Activated T-helper 2 cell treated with anti-CD3 and anti-CD28 coated beads, Interferon-gamma antibody, Interleukin-2, Interleukin-4, amounts not matched to agents 10 μg/mL and 5 μg/mL and 100 μg/mL, durations not matched to agents 14 hours and 24 hours and 36 hours (primary cell): ENCODE measurements at regions of chr4 and their contacts with region 1.

Region 1: GRCh38 chr4:67700738-67701516 is at the start of gene UBA6:
- DNase-seq: peak; percentile 94
- H3K4me3 Mint-ChIP-seq: peak within 1 kb of the TSS; percentile 99
- H3K27ac Mint-ChIP-seq: peak within 1 kb of the TSS; percentile 96
- H3K4me1 Mint-ChIP-seq: peaks cover 53% of the 10 kb centered on the region
- H3K27me3 Mint-ChIP-seq: no peaks in the 10 kb centered on the region
- total RNA-seq, gene UBA6: 84.8 and 88.4 TPM in 2 replicates

Region 2: GRCh38 chr4:67522851-67523671 is 177.9 kb before region 1 on chr4:
- intact Hi-C with region 1: loop called (anchors 1 kb)
- DNase-seq: no peak
- H3K4me3 Mint-ChIP-seq: peak overlapping the region; percentile 45
- H3K27ac Mint-ChIP-seq: peak overlapping the region; percentile 96
- H3K4me1 Mint-ChIP-seq: peaks cover 60% of the 10 kb centered on the region
- H3K27me3 Mint-ChIP-seq: no peaks in the 10 kb centered on the region

Region 3: GRCh38 chr4:67684839-67685531 is 15.9 kb before region 1 on chr4:
- intact Hi-C with region 1: loop called (anchors 2 kb)
- DNase-seq: no peak
- H3K4me3 Mint-ChIP-seq: no peak overlapping the region
- H3K27ac Mint-ChIP-seq: peak overlapping the region; percentile 23
- H3K4me1 Mint-ChIP-seq: peaks cover 44% of the 10 kb centered on the region
- H3K27me3 Mint-ChIP-seq: no peaks in the 10 kb centered on the region

Region 4: GRCh38 chr4:67746797-67747495 is 46.0 kb after region 1 on chr4:
- intact Hi-C with region 1: loop called (anchors 2 kb)
- DNase-seq: no peak
- H3K4me3 Mint-ChIP-seq: no peak overlapping the region
- H3K27ac Mint-ChIP-seq: peak overlapping the region; percentile 2
- H3K4me1 Mint-ChIP-seq: peaks cover 17% of the 10 kb centered on the region
- H3K27me3 Mint-ChIP-seq: no peaks in the 10 kb centered on the region

Region 5: DNA sequence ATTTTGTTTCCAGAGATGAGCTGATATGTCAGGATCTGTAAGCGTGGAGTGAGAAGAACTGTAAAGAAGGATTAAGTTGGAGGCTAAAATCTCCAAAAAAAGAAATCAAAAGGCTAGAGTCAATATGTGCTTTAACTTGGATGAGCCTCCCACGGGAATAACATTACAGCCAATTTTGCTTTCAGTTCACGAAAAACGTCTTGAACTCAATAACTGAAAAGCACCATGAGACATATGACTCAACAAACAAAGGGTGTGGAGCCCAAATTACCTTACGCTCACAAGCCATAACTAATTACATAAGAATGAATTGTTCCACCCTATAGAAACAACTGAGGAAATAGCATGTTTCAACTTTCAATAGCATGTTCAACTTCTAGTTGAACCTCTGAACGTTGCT is 160.6 kb after region 1 on chr4:
- intact Hi-C with region 1: no loop called
- DNase-seq: no peak
- H3K4me3 Mint-ChIP-seq: no peak overlapping the region
- H3K27ac Mint-ChIP-seq: no peak overlapping the region
- H3K4me1 Mint-ChIP-seq: no peaks in the 10 kb centered on the region
- H3K27me3 Mint-ChIP-seq: no peaks in the 10 kb centered on the region

Region 6: GRCh38 chr4:68249434-68249833 is 548.5 kb after region 1 on chr4:
- intact Hi-C with region 1: loop called (anchors 10 kb)
- DNase-seq: no peak
- H3K4me3 Mint-ChIP-seq: peak overlapping the region; percentile 62
- H3K27ac Mint-ChIP-seq: peak overlapping the region; percentile 97
- H3K4me1 Mint-ChIP-seq: peaks cover 14% of the 10 kb centered on the region
- H3K27me3 Mint-ChIP-seq: no peaks in the 10 kb centered on the region